A549 (cell line): ENCODE measurements at regions of chr2 and their contacts with region 1.

Region 1: DNA sequence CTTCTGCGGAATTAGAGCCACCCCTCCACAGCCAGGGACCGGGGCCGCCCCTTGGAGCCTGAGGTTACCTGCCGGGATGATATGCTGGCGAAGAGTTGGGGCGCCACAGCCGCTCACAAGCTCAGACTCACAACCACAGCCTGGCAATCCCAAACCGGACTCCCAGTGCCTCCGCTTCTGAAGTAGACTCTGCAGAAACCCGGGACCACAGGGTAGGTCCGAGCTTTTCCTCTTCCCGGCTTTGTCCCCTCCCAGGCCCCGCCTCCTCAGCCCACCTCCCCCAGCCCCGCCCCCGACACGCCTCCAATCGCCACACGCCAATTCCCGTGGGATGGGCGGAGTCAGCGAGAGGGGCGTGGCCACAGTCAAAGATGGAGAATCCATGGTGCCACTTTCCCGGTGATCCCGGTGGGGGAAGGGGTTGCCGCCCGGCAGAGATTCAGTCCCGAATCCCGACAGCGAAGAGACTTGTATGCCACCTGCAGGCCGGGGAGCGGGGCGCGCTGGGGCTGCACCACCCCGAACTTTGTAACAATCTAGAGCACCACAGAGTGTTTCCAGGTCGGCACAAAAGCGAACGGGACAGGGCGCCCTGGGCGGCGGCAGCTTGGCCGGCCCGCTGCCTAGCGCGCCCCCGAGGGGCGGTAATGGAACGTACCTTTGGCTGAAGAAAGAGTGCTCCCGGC is at the start of gene IDH1:
- DNase-seq: peak; percentile 85 to 95
- ATAC-seq: peak; percentile 88
- H3K4me3 ChIP-seq: peak within 1 kb of the TSS; percentile 96
- H3K27ac ChIP-seq: peak within 1 kb of the TSS; percentile 86 to 90
- H3K4me1 ChIP-seq: peaks cover 37% of the 10 kb centered on the region
- CTCF ChIP-seq: peak; percentile 69
- EP300 ChIP-seq: no peak
- POLR2A ChIP-seq: peak; percentile 80
- RAD21 ChIP-seq: peak; percentile 38 to 64; a peak in 4 of 5 replicates
- polyA plus RNA-seq, gene IDH1: 272 and 346 TPM in 2 replicates

Region 2: GRCh38 chr2:208101716-208102631 is 153.0 kb before region 1 on chr2:
- CTCF ChIA-PET with region 1: interaction called, 27 read pairs
- POLR2A ChIA-PET with region 1: interaction called, 12 read pairs
- DNase-seq: peak in 1 of 2 experiments; percentile 45
- ATAC-seq: peak; percentile 84 to 87; a peak in 5 of 6 replicates
- H3K4me3 ChIP-seq: no peak overlapping the region
- H3K27ac ChIP-seq: no peak overlapping the region
- H3K4me1 ChIP-seq: peaks cover 5% of the 10 kb centered on the region; the same call in 1 of the 3 replicates
- CTCF ChIP-seq: peak; percentile 63
- EP300 ChIP-seq: no peak
- POLR2A ChIP-seq: no peak
- RAD21 ChIP-seq: peak; percentile 66 to 72

Region 3: DNA sequence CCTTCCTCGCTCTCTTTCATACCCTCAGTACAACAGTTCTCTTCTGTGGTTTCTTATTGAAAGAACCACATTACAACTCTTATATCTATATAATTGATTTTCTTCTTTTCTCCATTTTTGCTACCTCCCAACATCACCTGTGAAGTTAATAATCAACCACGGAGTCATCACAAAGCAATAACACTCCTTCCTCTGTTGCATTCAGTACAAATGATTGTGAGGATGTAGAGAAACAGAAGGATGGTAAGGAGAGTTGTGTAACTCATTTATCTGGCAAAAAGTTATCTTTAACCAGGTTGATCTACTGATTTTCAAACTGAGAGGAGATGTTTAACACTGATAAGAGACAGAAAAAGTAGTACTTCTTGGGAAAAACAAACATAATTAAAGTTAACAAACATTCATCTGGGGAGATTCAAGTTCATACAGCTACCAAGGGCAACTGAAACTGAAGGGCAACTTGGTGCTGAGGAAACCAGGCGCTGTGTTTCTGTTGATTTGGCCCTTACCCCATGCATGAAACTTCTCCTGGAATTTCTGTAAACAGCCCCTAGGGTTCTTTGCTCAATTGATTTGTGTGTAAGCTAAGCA is 14.3 kb before region 1 on chr2:
- CTCF ChIA-PET with region 1: interaction called, 11 read pairs
- POLR2A ChIA-PET with region 1: interaction called, 5 read pairs
- DNase-seq: no peak
- ATAC-seq: no peak
- H3K4me3 ChIP-seq: no peak overlapping the region
- H3K27ac ChIP-seq: no peak overlapping the region
- H3K4me1 ChIP-seq: no peaks in the 10 kb centered on the region
- CTCF ChIP-seq: no peak
- EP300 ChIP-seq: no peak
- POLR2A ChIP-seq: no peak
- RAD21 ChIP-seq: no peak

Region 4: DNA sequence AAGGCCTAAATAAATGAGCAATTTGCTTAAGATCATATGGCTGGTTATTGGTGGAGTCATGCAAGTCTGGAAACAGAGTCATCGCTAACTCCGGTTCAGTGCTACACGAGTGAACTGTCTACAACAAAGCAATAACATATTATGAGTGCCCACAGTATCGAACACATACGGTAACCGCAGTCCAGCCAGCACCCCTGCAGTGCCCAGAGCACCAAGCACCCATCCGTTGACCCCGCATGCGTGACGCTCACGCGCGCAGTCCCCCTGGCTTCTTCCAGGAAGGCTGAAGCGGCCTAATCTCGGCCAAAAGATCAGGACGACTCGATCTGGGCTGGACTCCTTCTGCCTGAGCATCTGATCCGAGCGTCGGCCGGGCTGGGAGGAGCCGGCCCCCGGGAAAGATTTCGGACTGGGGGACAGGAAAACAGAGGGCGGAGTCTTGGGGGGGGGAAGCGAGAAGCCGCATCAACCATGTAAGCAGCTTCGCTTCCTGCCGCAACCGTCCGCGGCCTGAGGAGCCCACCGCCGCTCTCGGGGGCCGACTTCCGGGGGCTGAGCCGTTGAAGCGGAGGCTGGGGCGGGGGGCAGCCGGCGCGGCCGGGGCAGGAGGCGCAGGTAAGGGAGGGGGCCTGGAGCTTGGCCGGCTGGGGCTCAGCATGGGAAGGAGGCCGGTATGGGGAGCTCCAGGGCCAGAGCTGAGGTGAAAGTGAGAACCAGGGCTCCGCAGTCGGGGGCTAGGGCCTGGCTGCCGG is 11.0 kb after region 1 on chr2 and contains the start of gene PIKFYVE:
- CTCF ChIA-PET with region 1: interaction called, 12 read pairs
- POLR2A ChIA-PET with region 1: interaction called, 50 read pairs
- DNase-seq: peak; percentile 92 to 98
- ATAC-seq: peak; percentile 97 to 98
- H3K4me3 ChIP-seq: peak within 1 kb of the TSS; percentile 97
- H3K27ac ChIP-seq: peak within 1 kb of the TSS; percentile 95 to 97
- H3K4me1 ChIP-seq: peaks cover 20% of the 10 kb centered on the region
- CTCF ChIP-seq: no peak
- EP300 ChIP-seq: no peak
- POLR2A ChIP-seq: peak; percentile 35; the same call in 1 of the 2 replicates
- RAD21 ChIP-seq: 0 out of 5 replicates have a peak, but pooled peaks of 1 of the 2 experiments have one; percentile 7
- polyA plus RNA-seq, gene PIKFYVE: 19.3 and 22.0 TPM in 2 replicates

Region 5: DNA sequence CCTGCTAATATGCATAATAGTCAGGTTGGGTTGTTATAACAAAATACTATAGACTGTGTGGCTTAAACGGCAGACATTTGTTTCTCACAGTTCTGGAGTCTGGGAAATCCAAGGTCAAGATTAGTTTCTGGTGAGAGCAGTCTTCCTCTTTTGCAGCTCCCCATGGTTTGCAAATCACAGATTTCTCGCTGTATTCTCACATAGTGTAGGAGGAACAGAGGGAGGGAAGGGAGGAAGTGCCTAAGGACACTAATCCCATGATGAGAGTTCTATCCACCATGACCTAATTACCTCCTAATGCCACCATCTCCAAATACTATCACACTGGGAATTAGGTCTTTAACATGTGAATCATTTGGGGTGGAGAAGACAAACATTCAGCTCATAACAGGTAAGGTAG is 131.5 kb after region 1 on chr2:
- CTCF ChIA-PET with region 1: no interaction called
- POLR2A ChIA-PET with region 1: no interaction called
- DNase-seq: no peak
- ATAC-seq: no peak
- H3K4me3 ChIP-seq: no peak overlapping the region
- H3K27ac ChIP-seq: no peak overlapping the region
- H3K4me1 ChIP-seq: no peaks in the 10 kb centered on the region
- CTCF ChIP-seq: no peak
- EP300 ChIP-seq: no peak
- POLR2A ChIP-seq: no peak
- RAD21 ChIP-seq: no peak